PC-9 (cell line): ENCODE measurements at regions of chr10 and their contacts with region 1.

Region 1: DNA sequence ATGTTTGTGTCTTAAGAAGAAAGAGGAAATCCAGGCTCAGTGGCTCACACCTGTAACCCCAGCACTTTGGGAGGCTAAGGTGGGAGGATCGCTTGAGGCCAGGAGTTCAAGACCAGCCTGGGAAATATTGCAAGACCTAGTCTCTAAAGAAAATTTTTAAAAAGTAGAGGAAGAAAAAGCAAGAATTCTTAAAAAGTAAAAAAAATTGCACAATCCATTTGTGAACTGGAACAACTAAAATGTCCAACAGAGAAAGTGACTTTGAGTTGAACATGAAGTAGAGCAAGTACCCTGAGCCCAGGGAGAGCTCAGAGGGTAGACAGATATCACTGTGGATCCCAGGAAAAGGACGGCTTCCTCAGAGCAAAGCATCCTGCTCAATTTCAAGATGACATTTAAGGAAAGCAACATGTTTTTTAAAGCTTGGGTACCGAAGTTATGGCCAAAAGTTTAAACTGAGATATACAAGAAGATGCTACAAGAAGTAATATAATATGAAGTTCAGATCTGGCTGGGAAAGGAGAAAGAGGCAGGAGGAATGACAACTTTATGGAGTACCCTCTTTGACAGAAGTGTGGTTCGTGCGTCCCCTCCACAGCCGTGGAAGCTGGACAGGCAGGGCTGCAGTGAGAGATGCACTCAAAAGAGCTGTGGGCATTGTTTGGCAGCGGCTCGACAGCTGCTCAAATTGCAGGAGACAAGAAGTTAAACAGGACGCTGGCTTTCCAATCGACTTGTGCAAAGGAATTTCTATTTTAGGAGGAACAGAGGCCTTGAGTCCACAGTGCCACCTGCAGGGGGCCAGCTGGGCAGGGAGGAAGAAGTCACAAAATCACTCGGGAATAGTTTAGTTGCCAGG is 201.3 kb downstream of the JCAD start:
- DNase-seq: peak; percentile 79
- H3K4me3 ChIP-seq: no peak overlapping the region
- H3K27ac ChIP-seq: peak overlapping the region; percentile 60
- H3K4me1 ChIP-seq: peaks cover 35% of the 10 kb centered on the region
- H3K27me3 ChIP-seq: no peaks in the 10 kb centered on the region
- CTCF ChIP-seq: peak; percentile 73

Region 2: GRCh38 chr10:29105531-29106215 is 752.4 kb before region 1 on chr10:
- CTCF ChIA-PET with region 1: no interaction called
- POLR2A ChIA-PET with region 1: no interaction called
- intact Hi-C with region 1: no loop called
- DNase-seq: peak; percentile 51 to 81
- H3K4me3 ChIP-seq: no peak overlapping the region; the same call in 1 of the 2 replicates
- H3K27ac ChIP-seq: peak overlapping the region; percentile 79
- H3K4me1 ChIP-seq: peaks cover 59% of the 10 kb centered on the region
- H3K27me3 ChIP-seq: no peaks in the 10 kb centered on the region
- CTCF ChIP-seq: no peak

Region 3: DNA sequence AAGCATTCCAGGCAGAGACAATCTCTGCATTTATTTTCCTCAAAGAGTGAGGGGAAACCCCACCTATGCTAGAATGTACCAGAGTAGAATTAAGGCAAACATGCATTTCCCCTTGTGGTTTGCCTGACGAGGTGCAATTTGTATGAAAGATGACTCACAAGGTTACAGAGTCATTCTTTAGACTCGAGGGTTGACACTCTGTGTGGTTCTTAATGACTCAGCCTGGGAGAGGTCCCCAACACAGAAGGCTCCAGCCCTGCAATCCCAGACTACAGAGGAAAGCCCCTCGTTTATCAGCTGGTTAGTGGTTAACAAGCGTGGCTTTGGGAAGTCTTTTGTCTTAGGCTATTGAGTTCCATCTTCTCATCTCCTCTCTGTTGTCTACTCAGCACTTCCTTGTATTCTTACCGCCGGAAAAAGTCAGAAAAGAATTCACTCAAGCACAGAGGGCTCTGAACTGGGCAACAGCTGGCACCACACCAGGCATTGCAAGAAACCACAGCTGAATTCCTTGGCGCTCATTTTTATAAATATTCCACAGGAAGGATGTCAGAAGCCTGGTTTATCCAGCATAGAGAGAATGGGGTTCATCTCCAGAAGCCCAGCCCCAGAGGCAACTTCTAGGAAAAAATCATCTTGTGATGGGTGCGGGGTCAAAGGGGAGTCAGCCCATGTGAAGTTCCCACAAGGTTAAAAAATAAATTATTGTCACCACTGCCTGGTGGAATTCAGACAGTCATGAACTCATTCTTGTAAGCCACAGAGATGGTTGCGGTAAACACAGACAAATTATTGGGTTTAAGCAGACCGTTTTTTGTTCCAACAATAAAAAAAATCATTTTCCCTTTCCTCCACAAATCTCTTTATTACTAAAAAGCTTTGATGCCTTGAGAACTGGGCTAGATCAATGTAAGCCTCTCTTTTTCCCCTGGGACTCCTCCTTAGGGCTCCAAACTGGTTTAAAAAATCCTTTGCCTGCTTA is 198.8 kb before region 1 on chr10:
- CTCF ChIA-PET with region 1: interaction called, 5 read pairs
- POLR2A ChIA-PET with region 1: no interaction called
- intact Hi-C with region 1: loop called (anchors 2 kb)
- DNase-seq: peak; percentile 87 to 97
- H3K4me3 ChIP-seq: no peak overlapping the region
- H3K27ac ChIP-seq: peak overlapping the region; percentile 76
- H3K4me1 ChIP-seq: peaks cover 51% of the 10 kb centered on the region
- H3K27me3 ChIP-seq: no peaks in the 10 kb centered on the region
- CTCF ChIP-seq: peak; percentile 45; the same call in 1 of the 2 replicates

Region 4: DNA sequence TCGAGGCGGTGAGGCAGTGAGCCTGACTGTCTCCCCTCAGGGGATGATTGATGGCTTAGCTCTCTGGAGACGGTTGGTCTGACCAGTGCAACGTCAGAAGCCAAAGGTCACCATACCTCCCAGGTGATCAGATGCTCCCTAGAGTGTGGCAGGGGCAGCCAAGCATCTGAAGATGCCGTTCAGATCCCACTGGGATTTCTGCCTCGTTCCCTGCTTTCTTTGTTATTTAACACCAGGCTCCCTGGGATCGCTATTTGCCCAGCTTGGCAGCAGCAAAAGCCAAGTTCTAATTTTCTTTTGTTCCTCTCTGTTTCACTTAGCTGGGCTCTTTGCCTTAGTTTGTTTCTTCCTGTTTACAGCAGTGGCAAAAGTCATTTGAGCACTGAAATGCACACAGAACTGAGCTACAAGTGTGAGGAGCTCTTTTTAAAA is 169.8 kb before region 1 on chr10:
- CTCF ChIA-PET with region 1: no interaction called
- POLR2A ChIA-PET with region 1: no interaction called
- intact Hi-C with region 1: no loop called
- DNase-seq: no peak
- H3K4me3 ChIP-seq: no peak overlapping the region
- H3K27ac ChIP-seq: no peak overlapping the region
- H3K4me1 ChIP-seq: peaks cover 14% of the 10 kb centered on the region
- H3K27me3 ChIP-seq: no peaks in the 10 kb centered on the region
- CTCF ChIP-seq: no peak

Region 5: GRCh38 chr10:29698773-29699490 is 159.1 kb before region 1 on chr10:
- CTCF ChIA-PET with region 1: interaction called, 10 read pairs
- POLR2A ChIA-PET with region 1: no interaction called
- intact Hi-C with region 1: no loop called
- DNase-seq: no peak
- H3K4me3 ChIP-seq: no peak overlapping the region
- H3K27ac ChIP-seq: no peak overlapping the region
- H3K4me1 ChIP-seq: no peaks in the 10 kb centered on the region
- H3K27me3 ChIP-seq: no peaks in the 10 kb centered on the region
- CTCF ChIP-seq: no peak

Region 6: GRCh38 chr10:29757551-29758297 is 100.3 kb before region 1 on chr10:
- CTCF ChIA-PET with region 1: no interaction called
- POLR2A ChIA-PET with region 1: no interaction called
- intact Hi-C with region 1: loop called (anchors 5 kb)
- DNase-seq: peak; percentile 75 to 90
- H3K4me3 ChIP-seq: no peak overlapping the region; the same call in 1 of the 2 replicates
- H3K27ac ChIP-seq: peak overlapping the region; percentile 86
- H3K4me1 ChIP-seq: peaks cover 24% of the 10 kb centered on the region
- H3K27me3 ChIP-seq: no peaks in the 10 kb centered on the region
- CTCF ChIP-seq: no peak

Region 7: DNA sequence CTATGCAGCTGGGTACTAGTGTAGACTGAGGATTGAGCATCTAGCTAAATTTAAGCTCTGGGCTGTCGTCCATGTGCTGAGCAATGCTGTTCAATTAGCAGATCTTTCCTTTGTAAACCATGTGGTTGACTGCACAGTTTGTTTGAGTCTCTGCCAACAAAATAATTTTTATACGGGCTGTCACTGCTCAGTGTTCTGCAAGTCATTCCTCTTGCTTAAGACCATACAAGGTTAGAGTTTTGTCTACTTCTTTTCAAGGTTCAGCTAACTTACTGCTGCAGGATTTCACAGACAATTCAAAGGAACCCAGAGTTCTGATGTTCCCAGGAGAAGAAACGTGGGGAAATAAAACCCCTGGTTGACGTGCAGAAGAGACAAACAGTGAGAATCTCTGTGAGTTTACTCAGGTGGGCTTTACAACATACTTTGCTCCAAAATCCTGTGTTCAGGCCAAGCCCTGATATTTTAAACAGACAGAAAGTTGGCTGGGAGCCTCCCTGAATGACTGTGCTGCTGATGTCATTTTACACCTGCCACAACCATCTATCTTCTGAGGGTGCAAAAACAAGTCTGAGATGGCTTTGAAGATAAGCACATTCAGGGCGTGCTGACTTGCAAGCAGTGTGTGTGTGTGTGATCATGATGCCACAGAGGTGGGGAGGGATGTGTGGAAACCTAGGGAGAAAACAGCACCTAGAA is 46.2 kb before region 1 on chr10:
- CTCF ChIA-PET with region 1: no interaction called
- POLR2A ChIA-PET with region 1: no interaction called
- intact Hi-C with region 1: loop called (anchors 1 kb)
- DNase-seq: peak; percentile 78 to 94
- H3K4me3 ChIP-seq: peak overlapping the region; percentile 33; the same call in 1 of the 2 replicates
- H3K27ac ChIP-seq: peak overlapping the region; percentile 99
- H3K4me1 ChIP-seq: peaks cover 58% of the 10 kb centered on the region
- H3K27me3 ChIP-seq: no peaks in the 10 kb centered on the region
- CTCF ChIP-seq: no peak

Region 8: GRCh38 chr10:30186371-30186875 is 328.4 kb after region 1 on chr10:
- CTCF ChIA-PET with region 1: no interaction called
- POLR2A ChIA-PET with region 1: no interaction called
- intact Hi-C with region 1: loop called (anchors 5 kb)
- DNase-seq: peak; percentile 35 to 61
- H3K4me3 ChIP-seq: peak overlapping the region; percentile 17; the same call in 1 of the 2 replicates
- H3K27ac ChIP-seq: peak overlapping the region; percentile 49
- H3K4me1 ChIP-seq: peaks cover 55% of the 10 kb centered on the region
- H3K27me3 ChIP-seq: no peaks in the 10 kb centered on the region
- CTCF ChIP-seq: no peak; the same call in 1 of the 2 replicates